Transverse colon (tissue), 4 donors: ENCODE measurements at regions of chr20 and their contacts with region 1.

Region 1: DNA sequence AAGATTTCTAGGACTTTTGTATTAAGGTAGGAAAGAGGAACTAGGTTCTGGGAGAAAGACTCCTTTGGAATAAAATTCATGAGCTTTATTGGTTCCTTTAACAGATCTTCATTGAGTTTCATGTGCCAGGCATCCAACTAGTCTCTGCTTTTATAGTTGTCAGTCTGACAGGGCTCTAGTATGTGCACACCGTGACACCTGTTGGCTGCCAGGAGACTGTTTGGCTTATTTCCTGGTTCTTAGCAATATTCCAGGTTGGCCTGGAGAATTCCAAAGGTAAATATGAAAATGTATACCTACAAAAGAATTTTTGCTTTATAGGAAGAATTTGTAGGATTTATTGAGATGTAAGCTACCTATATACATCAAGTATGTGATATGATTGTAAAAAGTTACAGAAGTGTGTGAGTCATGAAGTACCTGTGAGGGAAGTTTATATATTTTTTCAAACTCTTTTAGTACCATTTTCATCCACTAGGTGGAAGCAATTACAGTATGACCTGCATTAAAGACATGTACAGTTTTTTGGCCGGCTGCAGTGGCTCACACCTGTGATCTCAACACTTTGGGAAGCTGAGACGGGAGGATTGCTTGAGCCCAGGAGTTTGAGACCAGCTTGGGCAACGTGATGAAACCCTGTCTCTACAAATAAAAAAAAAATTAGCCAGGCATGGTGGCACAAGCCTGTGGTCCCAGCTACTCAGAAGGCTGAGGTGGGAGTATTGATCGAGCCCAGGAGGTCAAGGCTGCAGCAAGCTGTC is 35.2 kb downstream of the NDUFAF5 start:
- DNase-seq: no peak
- H3K4me3 ChIP-seq: no peak overlapping the region
- H3K27ac ChIP-seq: peak overlapping the region in 2 of 4 donors; percentile 17 to 24
- H3K4me1 ChIP-seq: peaks cover 0 to 5% (median 0%) of the 10 kb centered on the region in 4 donors
- H3K27me3 ChIP-seq: no peaks in the 10 kb centered on the region
- CTCF ChIP-seq: peak; percentile 70 to 80 (median 75)
- EP300 ChIP-seq: no peak
- POLR2A ChIP-seq: no peak

Region 2: DNA sequence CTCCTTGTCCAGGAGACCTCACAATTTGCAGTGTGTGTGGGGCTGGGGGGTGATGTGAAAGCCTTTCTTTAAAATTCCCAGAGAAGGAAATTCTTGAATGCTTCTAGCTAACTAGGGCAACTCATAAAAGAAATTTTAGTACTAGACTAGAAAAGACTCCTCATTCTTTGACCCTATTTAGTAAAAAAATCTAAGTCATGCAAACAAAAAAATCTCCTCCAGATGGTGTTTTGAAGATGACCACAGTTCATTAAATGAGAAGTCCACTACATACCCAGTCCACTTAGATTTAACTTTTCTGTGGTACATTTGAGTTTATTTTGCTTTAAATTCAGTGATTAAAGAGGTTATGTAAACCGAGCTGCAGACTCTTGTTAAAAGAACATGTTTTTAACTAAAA is 32.2 kb after region 1 on chr20:
- in situ Hi-C with region 1: no loop called
- intact Hi-C with region 1: no loop called
- DNase-seq: no peak
- H3K4me3 ChIP-seq: no peak overlapping the region
- H3K27ac ChIP-seq: peak overlapping the region; percentile 45 to 67 (median 54)
- H3K4me1 ChIP-seq: peaks cover 0 to 6% (median 0%) of the 10 kb centered on the region in 4 donors
- H3K27me3 ChIP-seq: no peaks in the 10 kb centered on the region
- CTCF ChIP-seq: no peak
- EP300 ChIP-seq: no peak
- POLR2A ChIP-seq: no peak

Region 3: GRCh38 chr20:13953227-13953626 is 133.2 kb after region 1 on chr20:
- in situ Hi-C with region 1: no loop called
- intact Hi-C with region 1: loop called (anchors 5 kb)
- DNase-seq: no peak
- H3K4me3 ChIP-seq: no peak overlapping the region
- H3K27ac ChIP-seq: no peak overlapping the region
- H3K4me1 ChIP-seq: no peaks in the 10 kb centered on the region
- H3K27me3 ChIP-seq: no peaks in the 10 kb centered on the region
- CTCF ChIP-seq: no peak
- EP300 ChIP-seq: no peak
- POLR2A ChIP-seq: no peak

Region 4: DNA sequence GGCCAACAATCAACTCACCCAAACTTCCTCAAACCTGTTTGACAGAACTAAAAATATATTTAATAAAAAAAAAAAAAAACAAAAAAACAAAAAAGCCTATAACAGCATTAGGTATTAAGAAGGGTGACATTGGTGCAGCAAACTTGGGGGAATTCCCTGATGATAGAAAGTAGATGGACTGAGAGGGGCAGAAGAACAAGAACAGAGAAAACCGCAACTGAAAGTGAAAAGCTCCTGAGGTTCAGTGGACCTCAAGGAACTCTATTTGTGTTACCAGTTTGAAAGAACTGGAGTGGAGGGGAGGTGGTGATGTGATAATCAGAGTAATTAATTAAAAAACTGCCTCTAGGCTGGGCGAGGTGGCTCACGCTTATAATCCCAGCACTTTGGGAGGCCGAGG is 229.0 kb after region 1 on chr20:
- in situ Hi-C with region 1: loop called (anchors 5 to 25 kb)
- intact Hi-C with region 1: no loop called
- DNase-seq: no peak
- H3K4me3 ChIP-seq: no peak overlapping the region
- H3K27ac ChIP-seq: no peak overlapping the region
- H3K4me1 ChIP-seq: no peaks in the 10 kb centered on the region
- H3K27me3 ChIP-seq: no peaks in the 10 kb centered on the region
- CTCF ChIP-seq: no peak
- EP300 ChIP-seq: no peak
- POLR2A ChIP-seq: no peak

Region 5: GRCh38 chr20:14055127-14055742 is 235.2 kb after region 1 on chr20:
- in situ Hi-C with region 1: loop called in 3 of 4 experiments (anchors 10 to 25 kb)
- intact Hi-C with region 1: loop called (anchors 5 kb)
- DNase-seq: no peak
- H3K4me3 ChIP-seq: no peak overlapping the region
- H3K27ac ChIP-seq: no peak overlapping the region
- H3K4me1 ChIP-seq: peaks cover 0 to 6% (median 0%) of the 10 kb centered on the region in 4 donors
- H3K27me3 ChIP-seq: no peaks in the 10 kb centered on the region
- CTCF ChIP-seq: peak; percentile 44 to 63 (median 56)
- EP300 ChIP-seq: no peak
- POLR2A ChIP-seq: no peak